Activated CD4-positive, alpha-beta memory T cell treated with anti-CD3 and anti-CD28 coated beads for 36 hours (primary cell): ENCODE measurements at regions of chr2 and their contacts with region 1.

Region 1: GRCh38 chr2:172674034-172674967 is 61.3 kb upstream of the RAPGEF4 start:
- DNase-seq: peak; percentile 50
- H3K4me3 Mint-ChIP-seq: no peak overlapping the region
- H3K27ac Mint-ChIP-seq: no peak overlapping the region
- H3K4me1 Mint-ChIP-seq: no peaks in the 10 kb centered on the region
- H3K27me3 Mint-ChIP-seq: peaks cover 5% of the 10 kb centered on the region

Region 2: GRCh38 chr2:172588931-172589330 is 85.4 kb before region 1 on chr2:
- CTCF ChIA-PET with region 1: interaction called, 12 read pairs
- POLR2A ChIA-PET with region 1: no interaction called
- intact Hi-C with region 1: no loop called
- DNase-seq: no peak
- H3K4me3 Mint-ChIP-seq: no peak overlapping the region
- H3K27ac Mint-ChIP-seq: no peak overlapping the region
- H3K4me1 Mint-ChIP-seq: peaks cover 27% of the 10 kb centered on the region
- H3K27me3 Mint-ChIP-seq: peaks cover 1% of the 10 kb centered on the region